Activated CD4-positive, alpha-beta memory T cell treated with anti-CD3 and anti-CD28 coated beads for 36 hours (primary cell): ENCODE measurements at regions of chr1 and their contacts with region 1.

Region 1: DNA sequence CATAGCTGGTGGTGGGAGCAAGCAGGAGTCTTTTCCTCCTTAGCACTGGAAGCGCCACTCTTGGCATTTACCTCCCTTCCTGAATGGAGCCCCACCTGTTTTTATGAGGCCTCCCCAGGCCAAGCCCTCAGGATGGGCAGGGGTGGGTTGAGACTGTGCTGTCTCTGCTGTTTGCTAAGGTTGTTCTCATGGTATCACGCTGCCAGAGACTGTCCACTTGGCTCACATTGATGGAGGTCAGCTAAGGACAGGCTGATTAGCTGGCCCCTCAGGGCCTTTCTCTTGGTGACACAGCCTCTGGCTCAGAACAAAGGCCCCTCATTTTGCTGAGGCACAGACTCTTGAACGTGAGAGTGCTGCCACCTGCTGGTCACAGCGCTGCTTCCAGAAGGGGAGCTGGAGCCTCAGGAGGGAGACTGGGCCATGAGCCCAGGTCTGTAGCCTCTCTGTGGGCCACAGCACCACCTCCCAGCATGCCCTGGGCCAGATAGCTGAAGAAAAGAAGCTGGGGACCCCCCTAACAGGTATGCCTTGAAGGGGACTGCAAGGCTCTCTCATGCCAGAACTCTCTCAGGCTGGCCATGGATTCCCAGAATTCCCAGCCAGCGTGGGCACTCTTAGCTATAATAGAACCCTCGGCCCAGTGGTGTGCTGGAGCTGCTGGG is 85.6 kb downstream of the CD58 start:
- DNase-seq: peak; percentile 90
- H3K4me3 Mint-ChIP-seq: no peak overlapping the region
- H3K27ac Mint-ChIP-seq: no peak overlapping the region
- H3K4me1 Mint-ChIP-seq: peaks cover 7% of the 10 kb centered on the region
- H3K27me3 Mint-ChIP-seq: no peaks in the 10 kb centered on the region

Region 2: DNA sequence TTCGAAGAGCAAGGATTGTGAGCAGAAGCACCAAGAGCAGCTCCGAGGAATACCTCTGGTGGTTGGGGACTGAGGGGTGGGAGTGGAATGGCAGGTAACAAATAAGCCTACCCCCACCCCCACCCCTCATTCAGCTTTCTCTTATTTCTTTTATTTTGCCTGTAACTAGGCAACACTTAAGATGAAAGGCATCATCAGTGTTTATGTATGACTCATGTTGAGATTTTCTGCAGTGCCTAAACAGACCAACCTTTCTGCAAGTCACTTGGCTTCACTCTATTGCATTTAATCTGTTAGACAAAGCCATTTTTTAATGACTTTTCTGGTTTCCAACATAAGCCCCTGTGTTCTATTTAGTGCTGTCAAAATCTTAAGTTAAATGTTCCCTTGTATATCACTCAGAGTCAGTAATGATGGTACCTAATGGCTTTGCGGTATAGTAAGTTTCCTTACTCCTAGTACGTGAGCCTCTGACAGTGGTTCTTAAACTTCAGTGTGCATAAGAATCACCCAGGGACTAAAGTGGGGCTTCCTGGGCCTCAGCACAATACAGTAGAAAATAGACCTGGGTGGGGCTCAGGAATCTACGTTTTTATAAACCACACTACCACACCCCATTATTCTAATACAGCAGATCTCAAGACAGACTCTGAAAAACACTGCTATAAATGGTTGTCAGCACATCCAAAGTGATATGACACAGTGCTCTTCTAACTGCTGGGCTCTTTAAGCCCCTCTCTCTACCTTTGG is 736.6 kb before region 1 on chr1:
- CTCF ChIA-PET with region 1: no interaction called
- POLR2A ChIA-PET with region 1: no interaction called
- intact Hi-C with region 1: no loop called
- DNase-seq: no peak
- H3K4me3 Mint-ChIP-seq: no peak overlapping the region
- H3K27ac Mint-ChIP-seq: no peak overlapping the region
- H3K4me1 Mint-ChIP-seq: no peaks in the 10 kb centered on the region
- H3K27me3 Mint-ChIP-seq: peaks cover 19% of the 10 kb centered on the region

Region 3: DNA sequence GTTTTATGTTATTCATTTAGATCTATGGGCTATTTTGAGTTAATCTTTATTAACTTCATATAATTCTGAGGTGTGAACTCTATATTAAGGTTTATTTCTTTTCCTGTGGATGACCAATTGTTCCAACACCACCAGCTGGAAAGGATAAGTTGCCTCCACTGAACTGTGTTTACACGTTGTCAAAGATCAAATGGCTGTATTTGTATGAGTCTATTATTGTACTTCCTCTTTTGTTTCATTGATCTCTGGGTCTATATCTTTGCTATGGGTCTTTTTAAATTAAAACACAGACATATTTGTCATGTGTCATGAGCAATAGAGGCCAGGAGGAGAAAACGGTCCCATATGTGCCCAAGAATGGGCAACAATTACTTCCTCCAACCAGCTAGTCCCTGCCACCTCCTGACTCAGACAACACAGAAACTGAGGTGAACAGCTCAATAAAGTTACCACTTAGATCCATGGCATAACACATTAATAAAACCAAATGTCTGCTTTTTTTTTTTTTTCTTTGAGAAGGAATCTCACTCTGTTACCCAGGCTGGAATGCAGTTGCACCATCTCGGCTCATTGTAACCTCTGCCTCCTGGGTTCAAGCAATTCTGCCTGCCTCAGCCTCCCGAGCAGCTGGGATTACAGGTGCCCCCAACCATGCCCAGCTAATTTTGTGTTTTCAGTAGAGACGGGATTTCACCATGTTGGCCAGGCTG is 379.1 kb before region 1 on chr1:
- CTCF ChIA-PET with region 1: interaction called, 10 read pairs
- POLR2A ChIA-PET with region 1: no interaction called
- intact Hi-C with region 1: no loop called
- DNase-seq: no peak
- H3K4me3 Mint-ChIP-seq: no peak overlapping the region
- H3K27ac Mint-ChIP-seq: no peak overlapping the region
- H3K4me1 Mint-ChIP-seq: no peaks in the 10 kb centered on the region
- H3K27me3 Mint-ChIP-seq: peaks cover 5% of the 10 kb centered on the region

Region 4: GRCh38 chr1:116151739-116152576 is 333.2 kb before region 1 on chr1:
- CTCF ChIA-PET with region 1: interaction called, 90 read pairs
- POLR2A ChIA-PET with region 1: no interaction called
- intact Hi-C with region 1: loop called (anchors 5 kb)
- DNase-seq: peak; percentile 85
- H3K4me3 Mint-ChIP-seq: peak overlapping the region; percentile 40
- H3K27ac Mint-ChIP-seq: no peak overlapping the region
- H3K4me1 Mint-ChIP-seq: peaks cover 11% of the 10 kb centered on the region
- H3K27me3 Mint-ChIP-seq: peaks cover 1% of the 10 kb centered on the region

Region 5: DNA sequence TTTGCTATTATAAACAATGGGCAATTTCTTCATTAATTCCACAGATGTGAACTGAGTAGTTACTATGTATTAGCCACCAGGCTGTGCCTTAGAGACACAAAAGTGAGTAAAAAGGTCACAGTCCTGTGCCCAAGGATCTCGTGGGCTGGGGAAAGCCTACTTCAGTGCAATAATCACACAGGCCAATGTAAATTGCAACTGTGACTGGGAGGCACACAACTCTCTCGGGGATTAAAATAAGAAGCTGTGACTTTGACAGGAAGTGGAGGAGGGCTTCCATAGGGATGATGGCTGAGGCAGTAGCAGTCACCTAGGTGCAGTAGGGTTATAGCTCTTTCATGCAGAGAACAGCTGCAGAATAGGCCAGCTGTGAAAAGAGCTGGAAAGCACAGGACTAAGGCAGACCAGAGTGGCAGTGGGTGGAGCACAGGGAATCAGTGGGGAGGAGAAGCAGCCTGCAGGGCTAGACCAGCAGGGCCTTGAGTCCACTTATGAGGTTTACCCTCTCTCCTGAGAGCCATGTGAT is 252.2 kb before region 1 on chr1:
- CTCF ChIA-PET with region 1: interaction called, 6 read pairs
- POLR2A ChIA-PET with region 1: no interaction called
- intact Hi-C with region 1: loop called (anchors 1 kb)
- DNase-seq: no peak
- H3K4me3 Mint-ChIP-seq: no peak overlapping the region
- H3K27ac Mint-ChIP-seq: no peak overlapping the region
- H3K4me1 Mint-ChIP-seq: peaks cover 14% of the 10 kb centered on the region
- H3K27me3 Mint-ChIP-seq: no peaks in the 10 kb centered on the region

Region 6: GRCh38 chr1:116372587-116373444 is 112.4 kb before region 1 on chr1 and contains the start of gene ATP1A1:
- CTCF ChIA-PET with region 1: interaction called, 16 read pairs
- POLR2A ChIA-PET with region 1: no interaction called
- intact Hi-C with region 1: no loop called
- DNase-seq: peak; percentile 98
- H3K4me3 Mint-ChIP-seq: peak within 1 kb of the TSS; percentile 88
- H3K27ac Mint-ChIP-seq: peak within 1 kb of the TSS; percentile 97
- H3K4me1 Mint-ChIP-seq: peaks cover 38% of the 10 kb centered on the region
- H3K27me3 Mint-ChIP-seq: peaks cover 3% of the 10 kb centered on the region
- total RNA-seq, gene ATP1A1: 253 to 258 TPM

Region 7: GRCh38 chr1:116418091-116418830 is 66.9 kb before region 1 on chr1:
- CTCF ChIA-PET with region 1: interaction called, 22 read pairs
- POLR2A ChIA-PET with region 1: no interaction called
- intact Hi-C with region 1: no loop called
- DNase-seq: peak; percentile 91
- H3K4me3 Mint-ChIP-seq: peak overlapping the region; percentile 87
- H3K27ac Mint-ChIP-seq: peak overlapping the region; percentile 75
- H3K4me1 Mint-ChIP-seq: peaks cover 32% of the 10 kb centered on the region
- H3K27me3 Mint-ChIP-seq: no peaks in the 10 kb centered on the region

Region 8: GRCh38 chr1:116472431-116472961 is 12.7 kb before region 1 on chr1:
- CTCF ChIA-PET with region 1: interaction called, 29 read pairs
- POLR2A ChIA-PET with region 1: no interaction called
- intact Hi-C with region 1: no loop called
- DNase-seq: no peak
- H3K4me3 Mint-ChIP-seq: no peak overlapping the region
- H3K27ac Mint-ChIP-seq: no peak overlapping the region
- H3K4me1 Mint-ChIP-seq: no peaks in the 10 kb centered on the region
- H3K27me3 Mint-ChIP-seq: no peaks in the 10 kb centered on the region

Region 9: GRCh38 chr1:116794804-116795481 is 309.7 kb after region 1 on chr1:
- CTCF ChIA-PET with region 1: no interaction called
- POLR2A ChIA-PET with region 1: no interaction called
- intact Hi-C with region 1: no loop called
- DNase-seq: no peak
- H3K4me3 Mint-ChIP-seq: no peak overlapping the region
- H3K27ac Mint-ChIP-seq: peak overlapping the region; percentile 40
- H3K4me1 Mint-ChIP-seq: peaks cover 66% of the 10 kb centered on the region
- H3K27me3 Mint-ChIP-seq: no peaks in the 10 kb centered on the region